Dorsolateral prefrontal cortex (tissue), 120 donors: ENCODE measurements at regions of chr16 and their contacts with region 1.

Region 1: GRCh38 chr16:4766874-4767628 is at the start of gene ZNF500:
- DNase-seq: peak; percentile 98 to 100 (median 99)
- H3K4me3 ChIP-seq: peak within 1 kb of the TSS; percentile 43 to 100 (median 97)
- H3K27ac ChIP-seq: peak within 1 kb of the TSS; percentile 74 to 98 (median 92)
- H3K27me3 ChIP-seq: no peaks in the 10 kb centered on the region
- CTCF ChIP-seq: peak in 32 of 56 donors; percentile 12 to 58 (median 32)
- total RNA-seq, gene ZNF500: 15.4 to 45.7 (median 25.2) TPM

Region 2: GRCh38 chr16:4425378-4426020 is 341.6 kb before region 1 on chr16 and contains the start of gene DNAJA3:
- intact Hi-C with region 1: loop called in 1 of 2 experiments (anchors 10 kb)
- DNase-seq: peak; percentile 89 to 94 (median 92)
- H3K4me3 ChIP-seq: peak within 1 kb of the TSS; percentile 59 to 100 (median 96)
- H3K27ac ChIP-seq: peak within 1 kb of the TSS; percentile 90 to 100 (median 99)
- H3K27me3 ChIP-seq: no peaks in the 10 kb centered on the region
- CTCF ChIP-seq: peak in 23 of 56 donors; percentile 7 to 46 (median 24)
- total RNA-seq, gene DNAJA3: 38.3 to 66.6 (median 53.2) TPM

Region 3: GRCh38 chr16:4734063-4734729 is 32.9 kb before region 1 on chr16 and contains the starts of genes ANKS3 and DNAAF8:
- intact Hi-C with region 1: loop called (anchors 1 to 5 kb)
- DNase-seq: peak; percentile 90 to 98 (median 98)
- H3K4me3 ChIP-seq: peak within 1 kb of the TSS; percentile 74 to 100 (median 96)
- H3K27ac ChIP-seq: peak within 1 kb of the TSS in 48 of 59 donors; percentile 14 to 88 (median 69)
- H3K27me3 ChIP-seq: no peaks in the 10 kb centered on the region
- CTCF ChIP-seq: peak in 17 of 56 donors; percentile 4 to 42 (median 19)
- total RNA-seq, gene ANKS3: 28.1 to 66.1 (median 44.0) TPM
- total RNA-seq, gene DNAAF8: 0.23 to 4.7 (median 1.5) TPM

Region 4: GRCh38 chr16:4802659-4803287 is 35.7 kb after region 1 on chr16:
- intact Hi-C with region 1: loop called (anchors 2 to 5 kb)
- DNase-seq: peak; percentile 87 to 96 (median 94)
- H3K4me3 ChIP-seq: peak overlapping the region; percentile 64 to 97 (median 85)
- H3K27ac ChIP-seq: peak overlapping the region; percentile 56 to 99 (median 94)
- H3K27me3 ChIP-seq: no peaks in the 10 kb centered on the region
- CTCF ChIP-seq: peak in 53 of 56 donors; percentile 16 to 74 (median 52)